ENCODE measurements at regions of chr5 and their contacts with region 1.

Region 1: GRCh38 chr5:116574367-116575325 is at the start of gene SEMA6A:
- DNase-seq: peak; percentile 95
- total RNA-seq, gene SEMA6A: 4.5 TPM

Region 2: GRCh38 chr5:116137544-116138378 is 436.9 kb before region 1 on chr5:
- intact Hi-C with region 1: loop called (anchors 5 kb)
- DNase-seq: no peak

Region 3: DNA sequence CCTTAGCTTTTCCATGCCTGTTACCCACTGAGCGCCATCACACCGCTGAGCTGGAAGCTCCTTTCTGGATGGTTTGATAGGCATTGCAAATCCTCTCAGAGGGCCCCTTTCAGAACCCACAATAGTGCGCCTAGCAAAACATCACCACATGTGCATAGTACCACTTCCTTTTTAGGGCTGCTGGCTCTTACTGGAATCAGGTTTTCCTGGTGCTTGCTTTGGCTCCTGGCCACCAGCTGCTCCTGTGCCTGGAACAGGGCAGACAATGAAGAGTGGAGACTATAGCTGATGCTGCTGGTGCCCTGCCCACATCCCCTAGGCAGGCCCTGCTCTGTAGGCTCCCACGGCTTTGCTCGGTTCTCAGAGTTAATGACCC is 163.6 kb after region 1 on chr5:
- intact Hi-C with region 1: loop called (anchors 5 kb)
- DNase-seq: no peak

Region 4: DNA sequence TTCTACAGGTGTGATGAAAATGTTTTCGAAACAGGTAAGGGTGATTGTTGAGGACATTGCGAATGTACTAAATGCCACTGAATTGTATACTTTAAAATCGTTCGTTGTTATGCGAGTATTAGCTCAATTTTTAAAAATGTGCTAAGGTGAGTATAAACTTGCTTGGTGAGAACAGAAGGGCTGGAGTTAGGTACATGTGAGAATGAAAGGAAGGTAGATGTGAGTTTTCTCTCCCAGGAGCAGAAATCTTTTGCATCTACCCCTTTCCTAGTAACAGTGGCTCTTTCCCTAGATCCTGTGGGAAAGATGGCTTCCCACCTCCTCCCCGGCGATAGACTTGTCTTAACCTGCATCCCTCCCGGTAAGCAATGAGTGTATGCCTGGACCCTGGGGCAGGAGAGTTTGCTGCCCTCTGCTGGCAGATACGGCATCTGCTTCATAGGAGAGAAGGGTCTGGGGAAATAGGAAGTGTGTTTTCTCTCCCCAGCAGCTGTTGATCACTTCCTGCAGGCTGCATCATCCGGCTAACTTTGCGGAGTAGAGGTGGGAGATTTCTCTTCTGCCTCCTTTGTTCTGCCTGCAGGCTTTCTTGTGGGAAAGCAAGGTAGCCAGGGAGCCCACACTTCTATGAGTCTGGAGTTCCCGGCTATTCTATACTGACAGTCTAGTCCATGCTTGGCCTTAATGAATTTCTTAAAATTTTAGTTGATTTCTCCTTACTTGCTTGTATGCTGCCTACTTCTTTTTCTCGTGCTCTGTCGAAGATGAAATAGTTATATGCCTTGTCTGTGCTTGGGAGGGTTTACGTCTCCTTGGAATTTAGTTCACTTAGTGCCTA is 373.3 kb after region 1 on chr5:
- intact Hi-C with region 1: loop called (anchors 2 kb)
- DNase-seq: peak; percentile 81

Measured in cardiac septum (tissue), 1 donor.